H1 (cell line): ENCODE measurements at regions of chr5 and their contacts with region 1.

Region 1: GRCh38 chr5:114101153-114101552 is 260.7 kb upstream of the KCNN2 start:
- DNase-seq: no peak
- H3K4me3 ChIP-seq: no peak overlapping the region
- H3K27ac ChIP-seq: no peak overlapping the region
- H3K4me1 ChIP-seq: no peaks in the 10 kb centered on the region
- H3K27me3 ChIP-seq: no peaks in the 10 kb centered on the region
- CTCF ChIP-seq: peak in 2 of 3 experiments; percentile 31 to 45; a peak in 2 of 4 replicates
- EP300 ChIP-seq: no peak
- POLR2A ChIP-seq: no peak
- RAD21 ChIP-seq: peak; percentile 70 to 71

Region 2: DNA sequence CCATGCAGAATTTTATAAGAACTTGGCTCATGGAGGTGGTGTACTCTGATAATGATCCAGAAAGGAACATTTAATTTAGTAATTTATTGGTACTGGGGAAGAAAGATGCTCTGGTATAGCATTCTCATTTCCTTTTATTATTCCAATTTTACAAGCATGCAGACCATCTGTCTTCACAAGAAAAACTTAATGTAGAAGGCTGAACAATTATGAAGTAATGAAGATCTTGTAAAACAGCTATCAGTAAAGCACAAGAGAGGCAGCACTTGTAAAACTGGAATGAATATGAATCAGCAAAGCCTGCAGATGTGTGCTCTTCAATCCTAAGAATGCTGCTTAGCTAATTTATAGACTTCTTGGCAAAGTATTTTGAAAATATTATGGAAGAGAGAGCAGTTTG is 287.7 kb before region 1 on chr5:
- CTCF ChIA-PET with region 1: no interaction called
- POLR2A ChIA-PET with region 1: no interaction called
- DNase-seq: no peak
- H3K4me3 ChIP-seq: no peak overlapping the region
- H3K27ac ChIP-seq: no peak overlapping the region
- H3K4me1 ChIP-seq: no peaks in the 10 kb centered on the region; a peak in 1 of 7 replicates
- H3K27me3 ChIP-seq: no peaks in the 10 kb centered on the region
- CTCF ChIP-seq: no peak
- EP300 ChIP-seq: no peak
- POLR2A ChIP-seq: no peak
- RAD21 ChIP-seq: no peak

Region 3: DNA sequence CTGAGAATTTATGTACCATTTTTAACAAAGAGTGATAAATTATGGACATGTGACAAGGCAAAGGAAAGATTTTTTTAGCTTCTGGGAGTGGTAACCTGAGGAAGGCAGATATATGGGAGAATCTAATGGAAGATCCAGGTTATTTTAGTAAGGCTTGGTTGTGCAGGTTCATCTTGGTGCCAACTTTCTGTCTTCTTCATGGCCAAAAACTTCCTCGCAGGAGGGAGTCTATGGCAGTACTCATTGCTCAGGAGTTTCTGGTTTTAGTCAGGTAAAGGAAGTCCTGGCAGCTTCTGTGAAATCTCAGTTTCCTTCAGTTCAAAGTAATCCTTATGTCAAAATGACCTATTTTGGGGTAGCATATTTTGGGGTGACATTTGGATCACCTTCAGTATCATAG is 12.5 kb after region 1 on chr5:
- CTCF ChIA-PET with region 1: interaction called, 11 read pairs
- POLR2A ChIA-PET with region 1: no interaction called
- DNase-seq: no peak
- H3K4me3 ChIP-seq: no peak overlapping the region
- H3K27ac ChIP-seq: no peak overlapping the region
- H3K4me1 ChIP-seq: no peaks in the 10 kb centered on the region
- H3K27me3 ChIP-seq: no peaks in the 10 kb centered on the region
- CTCF ChIP-seq: no peak
- EP300 ChIP-seq: no peak
- POLR2A ChIP-seq: no peak
- RAD21 ChIP-seq: no peak

Region 4: GRCh38 chr5:114148253-114148652 is 47.1 kb after region 1 on chr5:
- CTCF ChIA-PET with region 1: no interaction called
- POLR2A ChIA-PET with region 1: no interaction called
- DNase-seq: no peak
- H3K4me3 ChIP-seq: no peak overlapping the region
- H3K27ac ChIP-seq: no peak overlapping the region
- H3K4me1 ChIP-seq: no peaks in the 10 kb centered on the region
- H3K27me3 ChIP-seq: no peaks in the 10 kb centered on the region
- CTCF ChIP-seq: no peak
- EP300 ChIP-seq: no peak
- POLR2A ChIP-seq: no peak
- RAD21 ChIP-seq: no peak